GM23248 (cell line): ENCODE measurements at regions of chr14 and their contacts with region 1.

Region 1: DNA sequence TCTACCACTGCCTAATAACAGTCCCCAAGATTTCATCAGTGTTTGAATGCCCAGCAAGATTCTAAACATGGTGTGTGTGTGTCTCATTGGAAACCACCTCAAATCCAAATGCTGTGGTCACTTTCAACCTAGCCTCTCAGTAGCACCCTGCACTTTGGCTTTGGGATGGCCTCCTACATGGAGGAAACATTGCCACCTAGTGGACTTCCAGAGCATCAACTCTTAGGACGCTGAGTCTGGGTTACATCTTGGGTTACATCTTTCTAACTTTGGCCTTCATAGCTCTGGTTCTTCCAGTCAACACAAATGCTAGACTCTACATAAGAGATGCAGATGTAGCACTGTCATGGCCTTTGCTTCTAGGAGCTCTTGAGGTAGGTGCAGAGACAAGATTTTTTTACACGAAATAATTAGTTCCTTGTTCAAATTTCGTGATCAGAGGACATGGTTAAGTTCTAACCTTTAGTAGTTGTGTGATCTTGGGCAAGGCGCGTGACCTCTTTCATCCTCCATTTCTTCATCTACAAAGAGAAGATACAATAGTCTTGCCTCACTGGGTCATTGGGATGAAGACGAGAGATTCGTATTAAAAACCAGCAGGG is 113.5 kb upstream of the VASH1 start:
- DNase-seq: peak; percentile 81
- H3K4me3 ChIP-seq: no peak overlapping the region
- H3K27ac ChIP-seq: no peak overlapping the region
- H3K4me1 ChIP-seq: no peaks in the 10 kb centered on the region
- H3K27me3 ChIP-seq: 0 out of 2 replicates have a peak, but pooled peaks cover 5% of the 10 kb centered on the region

Region 2: DNA sequence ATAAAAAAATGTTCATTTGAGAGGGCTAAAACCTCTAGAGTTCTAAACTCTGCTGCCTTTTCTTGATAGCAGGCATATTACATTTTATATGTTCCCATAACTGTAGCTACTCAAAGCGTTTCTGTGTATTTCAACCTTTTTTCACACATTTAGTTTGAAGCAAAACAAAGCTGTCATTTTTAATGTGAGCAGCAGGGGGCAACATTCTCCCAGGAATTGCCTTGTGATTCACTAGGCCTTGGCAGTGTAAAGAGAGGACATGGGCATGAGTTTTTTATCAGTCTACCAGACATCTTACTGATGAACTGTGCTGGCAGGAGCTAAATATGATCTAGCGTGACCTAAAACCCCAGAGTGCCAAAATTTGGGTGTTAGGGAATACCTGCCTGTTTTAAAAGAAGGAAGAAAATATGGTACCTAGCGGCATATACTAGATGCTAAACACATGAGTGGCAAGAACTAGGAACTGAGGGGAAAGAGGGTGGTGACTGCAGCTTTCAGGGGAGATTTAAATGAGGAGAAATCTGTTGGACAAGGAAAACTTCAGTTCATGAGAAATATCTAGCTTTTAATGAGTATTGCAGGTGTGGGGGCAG is 596.9 kb before region 1 on chr14:
- in situ Hi-C with region 1: loop called (anchors 25 kb)
- DNase-seq: peak; percentile 72
- H3K4me3 ChIP-seq: no peak overlapping the region
- H3K27ac ChIP-seq: no peak overlapping the region
- H3K4me1 ChIP-seq: no peaks in the 10 kb centered on the region
- H3K27me3 ChIP-seq: no peaks in the 10 kb centered on the region

Region 3: DNA sequence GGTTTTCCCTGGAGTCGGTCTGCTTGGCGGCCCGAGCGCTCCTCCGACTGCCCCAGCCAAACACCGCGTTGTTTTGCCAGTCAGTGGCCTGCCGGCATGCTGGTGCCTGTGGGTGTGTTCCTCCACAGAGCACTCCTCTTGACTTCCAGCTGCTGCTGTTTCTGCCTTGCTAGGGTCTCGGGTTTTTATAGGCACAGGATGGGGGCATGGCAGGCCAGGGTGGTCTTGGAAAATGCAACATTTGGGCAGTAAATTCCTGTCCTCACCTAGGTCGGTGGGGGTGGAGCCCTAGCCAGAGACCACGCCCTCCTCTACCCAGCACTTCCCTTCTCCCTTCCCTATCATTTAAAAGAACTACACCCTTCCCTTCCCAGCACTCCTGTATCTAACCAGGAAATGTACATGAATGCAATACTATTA is 78.8 kb after region 1 on chr14:
- in situ Hi-C with region 1: no loop called
- DNase-seq: no peak
- H3K4me3 ChIP-seq: no peak overlapping the region
- H3K27ac ChIP-seq: no peak overlapping the region
- H3K4me1 ChIP-seq: no peaks in the 10 kb centered on the region
- H3K27me3 ChIP-seq: peaks cover 31% of the 10 kb centered on the region; the same call in 1 of the 2 replicates

Region 4: GRCh38 chr14:77782202-77782601 is 1134.4 kb after region 1 on chr14:
- in situ Hi-C with region 1: no loop called
- DNase-seq: peak; percentile 24
- H3K4me3 ChIP-seq: no peak overlapping the region
- H3K27ac ChIP-seq: no peak overlapping the region
- H3K4me1 ChIP-seq: no peaks in the 10 kb centered on the region
- H3K27me3 ChIP-seq: no peaks in the 10 kb centered on the region